Activated T-helper 2 cell treated with anti-CD3 and anti-CD28 coated beads, Interferon-gamma antibody, Interleukin-2, Interleukin-4, amounts not matched to agents 10 μg/mL and 5 μg/mL and 100 μg/mL, durations not matched to agents 14 hours and 24 hours and 36 hours (primary cell): ENCODE measurements at regions of chr2 and their contacts with region 1.

Region 1: GRCh38 chr2:27370026-27370815 is at the starts of genes EIF2B4 and SNX17:
- DNase-seq: peak; percentile 100
- H3K4me3 Mint-ChIP-seq: peak within 1 kb of the TSS; percentile 90
- H3K27ac Mint-ChIP-seq: peak within 1 kb of the TSS; percentile 97
- H3K4me1 Mint-ChIP-seq: peaks cover 23% of the 10 kb centered on the region
- H3K27me3 Mint-ChIP-seq: no peaks in the 10 kb centered on the region
- total RNA-seq, gene EIF2B4: 43.4 and 44.8 TPM in 2 replicates
- total RNA-seq, gene SNX17: 117 and 120 TPM in 2 replicates

Region 2: DNA sequence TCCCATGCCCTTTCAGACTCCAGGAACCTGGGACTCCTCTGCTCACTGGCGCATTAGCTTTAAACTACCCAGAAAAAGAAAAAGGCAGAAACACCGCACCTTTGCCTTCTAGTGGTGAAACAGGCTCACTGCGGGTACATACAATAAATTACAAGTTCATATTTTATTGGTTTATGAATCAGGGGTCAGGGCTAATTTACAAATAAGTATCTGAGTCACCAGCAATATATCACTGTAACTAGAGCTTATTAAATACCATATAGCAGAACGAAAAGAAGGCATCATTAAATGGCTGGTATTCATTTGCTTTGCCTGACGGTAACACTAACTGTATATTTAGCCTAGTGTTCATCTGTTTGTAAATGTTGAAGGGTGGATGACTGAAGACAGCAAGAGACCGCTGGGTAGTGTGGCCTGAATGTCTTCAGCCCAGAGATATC is 1670.0 kb before region 1 on chr2:
- intact Hi-C with region 1: no loop called
- DNase-seq: no peak
- H3K4me3 Mint-ChIP-seq: no peak overlapping the region
- H3K27ac Mint-ChIP-seq: no peak overlapping the region
- H3K4me1 Mint-ChIP-seq: peaks cover 2% of the 10 kb centered on the region
- H3K27me3 Mint-ChIP-seq: no peaks in the 10 kb centered on the region

Region 3: GRCh38 chr2:27211829-27212627 is 158.2 kb before region 1 on chr2 and contains the starts of genes ATRAID and SLC5A6:
- intact Hi-C with region 1: loop called (anchors 5 kb)
- DNase-seq: peak; percentile 88
- H3K4me3 Mint-ChIP-seq: peak within 1 kb of the TSS; percentile 98
- H3K27ac Mint-ChIP-seq: peak within 1 kb of the TSS; percentile 99
- H3K4me1 Mint-ChIP-seq: peaks cover 31% of the 10 kb centered on the region
- H3K27me3 Mint-ChIP-seq: no peaks in the 10 kb centered on the region
- total RNA-seq, gene ATRAID: 107 and 114 TPM in 2 replicates
- total RNA-seq, gene SLC5A6: 70.7 and 73.9 TPM in 2 replicates

Region 4: GRCh38 chr2:27249891-27250651 is 120.2 kb before region 1 on chr2:
- intact Hi-C with region 1: no loop called
- DNase-seq: peak; percentile 47
- H3K4me3 Mint-ChIP-seq: no peak overlapping the region
- H3K27ac Mint-ChIP-seq: no peak overlapping the region
- H3K4me1 Mint-ChIP-seq: no peaks in the 10 kb centered on the region
- H3K27me3 Mint-ChIP-seq: peaks cover 11% of the 10 kb centered on the region

Region 5: DNA sequence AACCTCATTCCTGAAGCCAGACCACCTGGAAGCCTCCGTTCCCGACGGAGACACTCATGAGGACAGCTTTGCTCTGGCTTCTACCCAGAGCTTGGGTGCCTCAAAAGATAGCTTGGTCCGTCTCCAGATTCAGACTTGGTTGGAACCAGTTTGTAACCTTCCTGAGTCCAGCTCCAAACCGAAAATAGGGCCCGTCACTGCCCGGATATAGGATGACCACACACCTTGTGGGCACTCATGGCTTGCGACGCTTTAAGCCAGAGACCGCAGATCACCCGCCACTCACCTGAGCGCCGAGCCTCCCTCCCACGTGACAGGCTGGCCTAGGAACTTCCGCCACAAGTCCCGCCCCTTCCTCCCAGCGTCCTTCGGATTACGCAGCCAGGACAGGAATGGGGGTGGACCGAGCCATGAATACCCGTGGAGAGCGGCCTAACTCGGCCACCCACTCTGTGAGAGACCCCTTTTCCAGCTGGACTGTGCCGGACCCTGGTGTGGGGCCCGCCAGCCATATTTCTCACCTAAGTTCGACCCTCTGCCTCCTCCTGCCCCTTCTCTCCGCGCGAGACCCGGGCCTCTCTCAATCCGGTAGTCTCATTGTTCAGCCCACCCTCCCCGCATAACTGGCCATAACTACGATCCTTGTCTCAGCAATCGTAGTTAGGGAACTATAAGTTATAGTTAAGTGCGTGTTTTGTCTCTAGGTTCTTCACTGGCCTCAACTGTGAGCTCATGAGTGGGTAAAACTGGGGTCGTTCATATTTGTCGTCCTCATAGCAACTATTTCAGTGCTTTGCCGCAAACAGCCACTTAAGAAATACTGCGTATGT is 47.2 kb before region 1 on chr2 and contains the start of gene MPV17:
- intact Hi-C with region 1: loop called (anchors 2 kb)
- DNase-seq: peak; percentile 84
- H3K4me3 Mint-ChIP-seq: peak within 1 kb of the TSS; percentile 99
- H3K27ac Mint-ChIP-seq: peak within 1 kb of the TSS; percentile 92
- H3K4me1 Mint-ChIP-seq: peaks cover 17% of the 10 kb centered on the region
- H3K27me3 Mint-ChIP-seq: no peaks in the 10 kb centered on the region
- total RNA-seq, gene MPV17: 80.4 and 82.6 TPM in 2 replicates

Region 6: DNA sequence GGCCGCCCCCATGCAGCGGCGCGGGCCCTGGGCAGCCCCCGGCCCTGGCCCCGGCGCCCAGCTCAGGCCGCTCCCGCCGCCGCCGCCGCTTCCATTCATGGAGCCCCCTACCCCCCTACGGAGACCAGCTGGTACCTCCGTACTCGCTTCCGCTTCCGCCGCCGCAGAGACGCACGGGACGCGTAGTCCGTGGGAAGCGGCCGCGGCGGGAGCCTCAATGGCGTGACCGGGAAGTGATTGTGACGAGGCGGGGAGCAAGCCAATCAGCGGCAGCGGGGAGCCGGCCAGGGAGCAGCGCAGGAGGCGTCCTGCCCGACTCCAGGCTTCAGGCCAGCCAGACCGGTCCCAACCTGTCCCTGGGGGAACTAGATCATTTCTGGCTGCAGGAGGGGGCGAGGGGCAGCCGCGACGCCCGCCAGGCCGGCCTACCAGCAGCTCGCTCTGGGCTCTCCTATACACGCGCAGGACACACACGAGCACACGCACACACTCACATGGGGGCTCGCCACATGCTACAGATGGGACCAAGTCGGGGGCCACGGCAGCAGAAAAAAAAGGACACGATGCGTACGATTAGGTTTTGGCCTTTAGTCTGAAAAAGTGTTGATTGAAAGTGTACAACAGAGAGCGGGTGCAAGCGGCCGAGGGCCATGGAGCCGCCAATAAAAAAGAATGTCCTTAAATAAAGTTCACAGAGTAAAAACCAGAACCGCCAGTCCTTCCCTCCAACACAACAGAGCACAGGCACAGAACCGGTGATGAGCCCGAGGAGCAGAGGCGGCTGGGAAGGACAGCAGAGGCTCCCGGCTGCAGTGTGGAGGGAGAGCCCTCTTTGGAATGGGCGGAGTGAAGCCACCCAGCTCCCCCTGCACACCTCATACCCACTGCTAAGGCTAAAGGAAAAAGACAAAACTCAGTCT is 10.7 kb after region 1 on chr2 and contains the start of gene ZNF513:
- intact Hi-C with region 1: loop called (anchors 1 kb)
- DNase-seq: peak; percentile 84
- H3K4me3 Mint-ChIP-seq: peak within 1 kb of the TSS; percentile 86
- H3K27ac Mint-ChIP-seq: peak within 1 kb of the TSS; percentile 92
- H3K4me1 Mint-ChIP-seq: peaks cover 18% of the 10 kb centered on the region
- H3K27me3 Mint-ChIP-seq: no peaks in the 10 kb centered on the region
- total RNA-seq, gene ZNF513: 11.7 and 12.8 TPM in 2 replicates

Region 7: DNA sequence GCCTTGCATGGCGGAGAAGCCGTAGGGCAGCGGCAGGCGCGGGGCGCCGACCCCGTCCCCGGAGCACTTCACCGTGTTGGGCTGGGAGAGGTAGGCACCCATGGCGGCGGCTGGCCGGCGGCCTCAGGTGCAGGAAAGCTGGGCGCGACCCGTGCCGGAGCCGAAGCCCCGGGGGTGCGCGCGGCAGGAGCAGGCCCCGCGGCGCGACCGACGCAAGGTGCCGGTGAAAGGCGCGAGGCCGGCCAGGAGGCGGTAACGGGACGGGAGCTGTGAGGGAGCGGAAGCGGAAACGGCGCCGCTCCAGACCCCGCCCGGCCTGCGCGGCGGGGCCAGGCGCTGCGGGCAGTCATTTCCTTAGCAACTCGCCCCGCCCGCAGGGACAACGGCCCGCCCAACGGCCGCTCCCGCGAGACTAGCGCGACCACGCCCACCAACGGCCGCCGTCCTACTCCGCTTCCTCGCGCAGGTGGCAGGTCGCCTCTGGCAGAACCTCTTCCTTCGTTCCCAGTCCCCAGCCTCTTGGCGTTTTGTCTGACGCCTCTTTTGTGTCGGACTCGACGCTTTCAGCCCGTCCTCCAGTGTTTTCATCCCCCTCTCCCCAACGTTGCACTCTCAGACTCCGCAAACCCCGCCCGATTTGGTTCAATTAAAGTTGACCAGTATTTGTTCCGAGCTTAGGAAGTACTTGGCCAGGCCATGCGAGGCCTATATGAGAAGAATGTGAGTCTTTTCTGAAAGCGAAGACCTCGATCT is 39.3 kb after region 1 on chr2 and contains the start of gene PPM1G:
- intact Hi-C with region 1: loop called (anchors 2 kb)
- DNase-seq: peak; percentile 96
- H3K4me3 Mint-ChIP-seq: peak within 1 kb of the TSS; percentile 89
- H3K27ac Mint-ChIP-seq: peak within 1 kb of the TSS; percentile 88
- H3K4me1 Mint-ChIP-seq: peaks cover 20% of the 10 kb centered on the region
- H3K27me3 Mint-ChIP-seq: peaks cover 3% of the 10 kb centered on the region
- total RNA-seq, gene PPM1G: 159 and 163 TPM in 2 replicates

Region 8: GRCh38 chr2:28164280-28164801 is 794.1 kb after region 1 on chr2:
- intact Hi-C with region 1: no loop called
- DNase-seq: no peak
- H3K4me3 Mint-ChIP-seq: no peak overlapping the region
- H3K27ac Mint-ChIP-seq: no peak overlapping the region
- H3K4me1 Mint-ChIP-seq: no peaks in the 10 kb centered on the region
- H3K27me3 Mint-ChIP-seq: no peaks in the 10 kb centered on the region